Prostate gland (tissue), 2 donors: ENCODE measurements at regions of chr3 and their contacts with region 1.

Region 1: GRCh38 chr3:62622553-62623193 is 249.3 kb upstream of the FEZF2 start:
- DNase-seq: peak; percentile 10
- H3K4me3 ChIP-seq: no peak overlapping the region
- H3K27ac ChIP-seq: no peak overlapping the region
- H3K4me1 ChIP-seq: no peaks in the 10 kb centered on the region
- H3K27me3 ChIP-seq: no peaks in the 10 kb centered on the region
- CTCF ChIP-seq: peak; percentile 35 to 64 (median 50)
- POLR2A ChIP-seq: no peak

Region 2: GRCh38 chr3:63076357-63076756 is 453.7 kb after region 1 on chr3:
- intact Hi-C with region 1: no loop called
- DNase-seq: no peak
- H3K4me3 ChIP-seq: no peak overlapping the region
- H3K27ac ChIP-seq: no peak overlapping the region
- H3K4me1 ChIP-seq: no peaks in the 10 kb centered on the region
- H3K27me3 ChIP-seq: no peaks in the 10 kb centered on the region
- CTCF ChIP-seq: no peak
- POLR2A ChIP-seq: no peak

Region 3: GRCh38 chr3:63193629-63194028 is 571.0 kb after region 1 on chr3:
- intact Hi-C with region 1: loop called (anchors 5 kb)
- DNase-seq: no peak
- H3K4me3 ChIP-seq: no peak overlapping the region
- H3K27ac ChIP-seq: no peak overlapping the region
- H3K4me1 ChIP-seq: no peaks in the 10 kb centered on the region
- H3K27me3 ChIP-seq: no peaks in the 10 kb centered on the region
- CTCF ChIP-seq: peak in 2 of 4 experiments; percentile 14 to 47
- POLR2A ChIP-seq: no peak

Region 4: DNA sequence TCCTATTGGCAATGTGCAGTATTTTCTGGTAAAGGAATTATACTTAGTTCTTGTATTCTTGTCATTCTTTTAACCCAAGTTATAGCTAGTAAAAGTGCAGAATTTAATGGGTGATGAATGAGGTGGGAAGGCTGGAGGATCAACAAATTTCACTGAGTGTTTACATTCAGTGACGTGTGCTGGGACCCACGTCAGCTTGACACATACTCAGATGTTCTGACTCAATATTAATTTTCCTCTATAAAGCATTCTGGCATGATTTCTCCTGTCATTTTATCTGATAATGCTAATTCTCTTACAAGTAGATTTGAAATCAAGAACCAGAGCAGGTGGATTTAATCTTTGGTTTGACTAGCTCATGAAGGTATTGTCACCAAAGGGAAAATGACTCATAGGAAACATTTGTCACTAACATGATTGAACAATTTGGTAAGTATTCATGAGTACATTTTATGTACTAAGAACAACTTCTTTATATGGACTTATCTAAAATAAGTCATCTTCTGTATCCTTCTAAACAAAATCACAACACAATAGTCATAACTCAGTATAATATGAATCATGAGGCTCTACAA is 584.5 kb after region 1 on chr3:
- intact Hi-C with region 1: no loop called
- DNase-seq: no peak
- H3K4me3 ChIP-seq: no peak overlapping the region
- H3K27ac ChIP-seq: no peak overlapping the region
- H3K4me1 ChIP-seq: no peaks in the 10 kb centered on the region
- H3K27me3 ChIP-seq: peaks cover 2% of the 10 kb centered on the region
- CTCF ChIP-seq: no peak
- POLR2A ChIP-seq: no peak

Region 5: DNA sequence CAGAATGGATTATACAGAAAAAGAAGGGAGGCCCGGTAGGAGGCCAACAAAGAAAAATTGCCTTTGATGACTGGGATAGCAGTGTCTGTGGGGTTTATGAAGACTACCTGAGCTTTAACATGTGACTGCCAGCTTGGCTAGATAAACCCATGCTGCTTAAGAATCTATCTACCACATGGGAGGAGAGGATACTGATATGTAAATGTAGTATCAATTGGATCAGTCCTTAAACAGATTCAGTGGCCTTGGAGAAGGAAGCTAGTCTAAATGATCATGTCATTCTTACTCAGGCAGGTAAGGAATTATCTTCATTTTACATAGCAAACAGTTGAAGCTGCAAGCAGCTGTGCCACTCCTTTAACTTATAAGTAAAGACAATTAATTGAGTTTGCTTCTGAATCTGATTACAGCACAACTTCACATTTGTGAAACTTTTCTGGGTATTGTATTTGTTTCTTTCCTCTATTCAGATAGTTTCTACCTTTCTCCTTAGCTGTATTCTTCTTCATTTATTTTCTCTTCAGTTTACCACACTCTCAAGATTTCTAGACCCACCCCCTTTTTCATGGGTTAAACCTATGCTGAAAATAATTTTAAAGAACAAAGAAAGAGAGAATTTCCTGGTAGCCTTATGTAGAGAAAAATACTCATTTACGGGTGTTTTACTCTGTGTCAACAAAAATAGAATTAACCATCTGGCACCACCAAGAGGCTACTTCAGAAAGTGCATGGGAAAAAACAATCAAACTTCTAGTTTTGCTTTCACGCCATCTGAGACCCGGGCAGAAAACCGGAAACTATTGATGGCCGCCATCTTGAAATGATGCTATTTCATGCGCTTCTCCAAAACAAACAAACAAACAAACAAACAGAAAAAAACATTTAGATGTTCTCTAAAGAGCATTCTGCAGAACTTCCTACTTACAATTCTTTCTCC is 605.7 kb after region 1 on chr3:
- intact Hi-C with region 1: loop called (anchors 5 kb)
- DNase-seq: no peak
- H3K4me3 ChIP-seq: no peak overlapping the region
- H3K27ac ChIP-seq: no peak overlapping the region
- H3K4me1 ChIP-seq: no peaks in the 10 kb centered on the region
- H3K27me3 ChIP-seq: no peaks in the 10 kb centered on the region
- CTCF ChIP-seq: peak; percentile 18 to 57 (median 38)
- POLR2A ChIP-seq: no peak